ENCODE measurements at regions of chr11 and their contacts with region 1.

Region 1: GRCh38 chr11:35822815-35823495 is 120.9 kb upstream of the LDLRAD3 start:
- DNase-seq: no peak
- H3K4me3 ChIP-seq: no peak overlapping the region
- H3K4me3 Mint-ChIP-seq: peak overlapping the region in 2 of 8 donors; percentile 7 to 8
- H3K27ac ChIP-seq: no peak overlapping the region
- H3K27ac Mint-ChIP-seq: no peak overlapping the region
- H3K4me1 ChIP-seq: peaks cover 9% of the 10 kb centered on the region
- H3K4me1 Mint-ChIP-seq: peaks cover 7 to 18% (median 14%) of the 10 kb centered on the region in 4 donors
- H3K27me3 ChIP-seq: no peaks in the 10 kb centered on the region
- H3K27me3 Mint-ChIP-seq: peaks cover 0 to 2% of the 10 kb centered on the region in 2 donors

Region 2: GRCh38 chr11:35605711-35606110 is 217.2 kb before region 1 on chr11:
- CTCF ChIA-PET with region 1: interaction called, 13 read pairs
- POLR2A ChIA-PET with region 1: no interaction called
- intact Hi-C with region 1: no loop called
- DNase-seq: no peak
- H3K4me3 ChIP-seq: no peak overlapping the region
- H3K4me3 Mint-ChIP-seq: no peak overlapping the region
- H3K27ac ChIP-seq: no peak overlapping the region
- H3K27ac Mint-ChIP-seq: no peak overlapping the region
- H3K4me1 ChIP-seq: no peaks in the 10 kb centered on the region
- H3K4me1 Mint-ChIP-seq: no peaks in the 10 kb centered on the region
- H3K27me3 ChIP-seq: no peaks in the 10 kb centered on the region
- H3K27me3 Mint-ChIP-seq: peaks cover 24 to 41% of the 10 kb centered on the region in 2 donors

Region 3: DNA sequence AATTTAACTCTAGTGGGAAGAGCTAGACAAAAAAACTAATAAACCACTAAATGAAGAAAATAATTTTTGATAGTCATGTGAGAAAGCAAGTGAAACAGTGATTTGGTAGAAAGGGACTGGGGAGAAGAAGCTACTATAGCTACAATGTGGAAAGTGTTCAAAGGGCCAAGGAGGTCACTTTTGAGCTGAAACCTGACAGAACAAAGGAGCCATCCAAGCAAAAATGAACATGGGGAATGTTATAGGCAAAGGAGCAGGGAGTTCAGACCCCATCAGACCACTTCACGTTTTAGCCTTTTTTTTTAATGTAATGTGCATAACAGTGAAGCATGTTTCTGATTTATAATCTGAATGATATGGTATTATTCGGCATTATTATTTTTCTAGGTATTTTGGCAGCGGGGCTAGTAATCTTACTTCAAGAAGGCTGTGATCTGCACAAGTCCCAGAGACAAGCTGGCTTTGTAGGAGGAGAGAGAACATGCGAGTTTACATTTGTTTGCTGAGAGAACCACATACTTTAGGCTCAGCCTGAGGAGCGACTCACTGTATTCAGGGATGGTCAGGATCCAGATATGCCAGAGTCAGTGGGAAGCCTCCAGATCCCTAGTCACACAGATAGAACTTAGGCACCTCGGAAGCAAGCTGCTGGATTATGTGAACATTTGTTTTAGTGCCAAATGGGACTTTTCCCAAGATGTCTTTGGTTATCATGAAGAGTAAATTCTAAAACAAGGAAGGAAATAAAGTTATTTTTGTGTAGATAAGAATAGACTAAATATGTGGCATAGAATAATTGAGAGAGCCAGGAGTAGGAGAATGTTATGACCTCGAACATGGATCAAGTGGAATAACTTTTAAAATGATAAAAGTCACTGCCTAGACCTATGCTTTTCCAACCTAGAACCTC is 41.7 kb before region 1 on chr11:
- CTCF ChIA-PET with region 1: interaction called, 13 read pairs
- POLR2A ChIA-PET with region 1: no interaction called
- intact Hi-C with region 1: no loop called
- DNase-seq: no peak
- H3K4me3 ChIP-seq: no peak overlapping the region
- H3K4me3 Mint-ChIP-seq: no peak overlapping the region
- H3K27ac ChIP-seq: no peak overlapping the region
- H3K27ac Mint-ChIP-seq: peak overlapping the region in 1 of 7 donors; percentile 43
- H3K4me1 ChIP-seq: peaks cover 14% of the 10 kb centered on the region
- H3K4me1 Mint-ChIP-seq: peaks cover 27 to 66% (median 47%) of the 10 kb centered on the region in 4 donors
- H3K27me3 ChIP-seq: no peaks in the 10 kb centered on the region
- H3K27me3 Mint-ChIP-seq: no peaks in the 10 kb centered on the region

Region 4: DNA sequence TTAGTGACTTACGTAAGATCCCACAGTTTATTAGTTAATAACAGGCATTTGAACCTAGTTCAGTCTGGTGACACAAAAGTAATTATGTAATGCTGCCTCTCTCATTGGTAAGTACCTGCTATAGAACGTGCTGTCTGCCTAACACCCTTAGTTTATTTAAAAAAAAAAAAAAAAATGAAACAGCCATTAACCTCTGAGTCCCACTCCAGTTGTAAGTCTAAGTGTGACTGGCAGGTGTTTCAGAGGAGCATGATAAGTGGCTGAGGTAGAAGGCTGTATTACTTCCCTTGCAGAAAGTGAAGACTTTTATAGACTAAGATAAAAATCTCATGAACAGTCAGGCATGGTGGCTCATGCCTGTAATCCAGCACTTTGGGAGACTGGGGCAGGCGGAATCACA is 19.8 kb before region 1 on chr11:
- CTCF ChIA-PET with region 1: interaction called, 18 read pairs
- POLR2A ChIA-PET with region 1: no interaction called
- intact Hi-C with region 1: no loop called
- DNase-seq: no peak
- H3K4me3 ChIP-seq: no peak overlapping the region
- H3K4me3 Mint-ChIP-seq: no peak overlapping the region
- H3K27ac ChIP-seq: no peak overlapping the region
- H3K27ac Mint-ChIP-seq: no peak overlapping the region
- H3K4me1 ChIP-seq: no peaks in the 10 kb centered on the region
- H3K4me1 Mint-ChIP-seq: peaks cover 0 to 13% (median 3%) of the 10 kb centered on the region in 4 donors
- H3K27me3 ChIP-seq: no peaks in the 10 kb centered on the region
- H3K27me3 Mint-ChIP-seq: no peaks in the 10 kb centered on the region

Region 5: DNA sequence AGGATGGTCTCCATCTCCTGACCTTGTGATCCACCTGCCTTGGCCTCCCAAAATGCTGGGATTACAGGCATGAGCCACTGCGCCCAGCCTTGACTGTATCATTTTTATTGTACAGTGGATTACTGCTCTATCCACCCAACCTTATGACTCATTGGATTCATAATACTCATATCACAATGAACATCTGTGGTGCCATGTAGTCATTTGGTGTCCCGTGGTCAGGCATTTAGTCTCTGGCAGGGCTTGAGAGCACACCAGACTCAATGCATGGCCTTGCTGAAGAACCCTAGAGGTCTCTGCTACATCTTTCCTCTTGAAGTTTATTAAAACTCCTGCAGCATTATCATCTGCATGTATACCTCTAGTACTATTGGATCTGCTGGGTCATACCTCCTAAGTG is 22.9 kb after region 1 on chr11:
- CTCF ChIA-PET with region 1: interaction called, 13 read pairs
- POLR2A ChIA-PET with region 1: no interaction called
- intact Hi-C with region 1: no loop called
- DNase-seq: no peak
- H3K4me3 ChIP-seq: no peak overlapping the region
- H3K4me3 Mint-ChIP-seq: no peak overlapping the region
- H3K27ac ChIP-seq: no peak overlapping the region
- H3K27ac Mint-ChIP-seq: no peak overlapping the region
- H3K4me1 ChIP-seq: no peaks in the 10 kb centered on the region
- H3K4me1 Mint-ChIP-seq: no peaks in the 10 kb centered on the region
- H3K27me3 ChIP-seq: no peaks in the 10 kb centered on the region
- H3K27me3 Mint-ChIP-seq: peaks cover 2 to 10% of the 10 kb centered on the region in 2 donors

Region 6: GRCh38 chr11:36212564-36213392 is 389.8 kb after region 1 on chr11:
- CTCF ChIA-PET with region 1: no interaction called
- POLR2A ChIA-PET with region 1: no interaction called
- intact Hi-C with region 1: no loop called
- DNase-seq: no peak
- H3K4me3 ChIP-seq: no peak overlapping the region
- H3K4me3 Mint-ChIP-seq: no peak overlapping the region
- H3K27ac ChIP-seq: no peak overlapping the region
- H3K27ac Mint-ChIP-seq: no peak overlapping the region
- H3K4me1 ChIP-seq: no peaks in the 10 kb centered on the region
- H3K4me1 Mint-ChIP-seq: no peaks in the 10 kb centered on the region
- H3K27me3 ChIP-seq: no peaks in the 10 kb centered on the region
- H3K27me3 Mint-ChIP-seq: peaks cover 3 to 16% of the 10 kb centered on the region in 2 donors

Region 7: DNA sequence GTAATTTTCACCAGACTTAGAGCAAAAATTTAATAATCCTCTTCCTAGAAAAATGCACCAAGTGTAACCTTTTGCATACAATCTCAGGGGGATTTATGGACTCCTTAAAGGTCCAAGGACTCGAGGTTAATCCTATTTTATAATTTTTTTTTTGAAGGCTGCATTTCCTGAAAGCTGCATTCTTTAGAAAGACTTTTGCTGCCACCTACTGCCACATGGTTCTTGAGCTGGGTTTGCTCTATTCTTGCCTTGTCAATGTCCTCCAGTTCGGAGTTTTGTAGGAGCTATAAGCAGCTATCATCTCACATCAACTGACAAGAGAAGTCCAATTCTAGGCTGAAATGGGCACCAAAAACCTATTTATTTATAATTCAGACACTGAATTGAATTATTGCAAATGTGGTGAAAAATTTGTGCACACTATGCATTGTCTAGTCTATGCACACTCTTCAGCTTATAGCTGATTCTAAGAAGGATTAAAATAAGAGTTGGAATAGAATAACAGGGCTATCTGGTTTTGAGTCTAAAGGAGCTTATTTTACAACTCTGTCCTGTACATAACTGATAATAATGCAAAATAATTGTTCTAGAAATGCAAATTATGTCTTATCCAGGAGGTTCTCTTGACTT is 655.9 kb after region 1 on chr11:
- CTCF ChIA-PET with region 1: interaction called, 24 read pairs
- POLR2A ChIA-PET with region 1: no interaction called
- intact Hi-C with region 1: no loop called
- DNase-seq: peak in 4 of 5 donors; percentile 34 to 43 (median 40)
- H3K4me3 ChIP-seq: no peak overlapping the region
- H3K4me3 Mint-ChIP-seq: no peak overlapping the region
- H3K27ac ChIP-seq: no peak overlapping the region
- H3K27ac Mint-ChIP-seq: peak overlapping the region in 1 of 7 donors; percentile 10
- H3K4me1 ChIP-seq: no peaks in the 10 kb centered on the region
- H3K4me1 Mint-ChIP-seq: peaks cover 3 to 8% (median 6%) of the 10 kb centered on the region in 4 donors
- H3K27me3 ChIP-seq: no peaks in the 10 kb centered on the region
- H3K27me3 Mint-ChIP-seq: no peaks in the 10 kb centered on the region

Measured in CD4-positive, alpha-beta memory T cell (primary cell).